GM13976 (cell line): ENCODE measurements at regions of chr10 and their contacts with region 1.

Region 1: GRCh38 chr10:34666008-34666705 is 148.9 kb downstream of the PARD3 start:
- DNase-seq: peak; percentile 62
- CTCF ChIP-seq: peak; percentile 47

Region 2: GRCh38 chr10:35218339-35218955 is 552.3 kb after region 1 on chr10:
- in situ Hi-C with region 1: loop called (anchors 25 kb)
- DNase-seq: peak; percentile 71
- CTCF ChIP-seq: peak; percentile 74